ENCODE measurements at regions of chr1 and their contacts with region 1.

Region 1: GRCh38 chr1:19596714-19597495 is 47.2 kb upstream of the NBL1 start:
- DNase-seq: peak; percentile 92 to 100 (median 94)
- ATAC-seq: peak; percentile 63
- H3K4me3 ChIP-seq: peak overlapping the region; percentile 90
- H3K4me3 Mint-ChIP-seq: peak overlapping the region; percentile 96
- H3K27ac ChIP-seq: peak overlapping the region; percentile 100
- H3K27ac Mint-ChIP-seq: peak overlapping the region; percentile 100
- H3K4me1 ChIP-seq: peaks cover 55% of the 10 kb centered on the region
- H3K4me1 Mint-ChIP-seq: peaks cover 49% of the 10 kb centered on the region
- H3K27me3 ChIP-seq: no peaks in the 10 kb centered on the region
- H3K27me3 Mint-ChIP-seq: no peaks in the 10 kb centered on the region
- CTCF ChIP-seq: no peak

Region 2: GRCh38 chr1:19251305-19252196 is 345.4 kb before region 1 on chr1 and contains the starts of genes EMC1 and MRTO4:
- CTCF ChIA-PET with region 1: no interaction called
- POLR2A ChIA-PET with region 1: interaction called, 9 read pairs
- intact Hi-C with region 1: loop called in 1 of 2 experiments (anchors 2 kb)
- DNase-seq: peak; percentile 79 to 92 (median 86)
- ATAC-seq: peak; percentile 93
- H3K4me3 ChIP-seq: peak within 1 kb of the TSS; percentile 80
- H3K4me3 Mint-ChIP-seq: peak within 1 kb of the TSS; percentile 96
- H3K27ac ChIP-seq: peak within 1 kb of the TSS; percentile 93 to 95
- H3K27ac Mint-ChIP-seq: peak within 1 kb of the TSS; percentile 94
- H3K4me1 ChIP-seq: peaks cover 40% of the 10 kb centered on the region
- H3K4me1 Mint-ChIP-seq: peaks cover 34% of the 10 kb centered on the region
- H3K27me3 ChIP-seq: no peaks in the 10 kb centered on the region
- H3K27me3 Mint-ChIP-seq: no peaks in the 10 kb centered on the region
- CTCF ChIP-seq: no peak
- total RNA-seq, gene EMC1: 21.9 to 22.2 TPM
- total RNA-seq, gene MRTO4: 10.2 to 12.0 TPM

Region 3: DNA sequence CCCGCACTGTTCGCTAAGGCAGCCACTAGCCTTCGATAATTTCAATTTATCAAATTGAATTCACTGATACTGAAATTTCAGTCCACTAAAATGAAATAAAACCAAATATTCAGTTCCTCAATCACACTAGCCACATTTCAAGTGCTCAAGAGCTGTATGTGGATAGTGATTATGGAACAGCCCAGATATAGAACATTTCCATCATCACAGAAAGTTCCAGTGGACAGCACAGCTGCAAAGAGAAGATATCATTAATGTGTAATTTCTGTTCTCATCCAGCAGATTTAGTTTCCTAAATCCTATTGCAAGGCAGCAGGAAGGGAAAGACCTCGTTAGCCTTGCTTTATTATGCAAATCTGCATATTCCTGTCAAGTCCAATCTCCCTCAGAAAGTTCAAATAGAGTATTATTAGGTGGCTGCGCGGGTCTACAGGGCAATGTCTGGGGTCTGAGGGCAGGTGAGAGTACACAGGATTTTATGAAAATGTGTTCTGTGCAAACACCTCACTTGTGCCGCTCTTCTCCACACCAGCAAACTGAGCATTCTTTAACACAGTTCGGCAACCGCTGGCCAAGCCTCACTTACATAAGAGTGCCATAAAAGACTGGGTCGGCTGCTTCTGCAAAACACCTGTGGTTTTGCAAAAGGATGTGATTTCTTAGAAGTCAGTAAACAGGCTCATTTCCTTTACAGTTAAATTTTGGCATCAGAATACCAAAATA is 134.0 kb before region 1 on chr1:
- CTCF ChIA-PET with region 1: no interaction called
- POLR2A ChIA-PET with region 1: interaction called, 15 read pairs
- intact Hi-C with region 1: loop called in 1 of 2 experiments (anchors 1 kb)
- DNase-seq: peak; percentile 55 to 91 (median 69)
- ATAC-seq: peak; percentile 78
- H3K4me3 ChIP-seq: peak overlapping the region; percentile 24
- H3K4me3 Mint-ChIP-seq: peak overlapping the region; percentile 81
- H3K27ac ChIP-seq: peak overlapping the region; percentile 42 to 93
- H3K27ac Mint-ChIP-seq: peak overlapping the region; percentile 86
- H3K4me1 ChIP-seq: peaks cover 100% of the 10 kb centered on the region
- H3K4me1 Mint-ChIP-seq: peaks cover 88% of the 10 kb centered on the region
- H3K27me3 ChIP-seq: no peaks in the 10 kb centered on the region
- H3K27me3 Mint-ChIP-seq: no peaks in the 10 kb centered on the region
- CTCF ChIP-seq: no peak

Region 4: DNA sequence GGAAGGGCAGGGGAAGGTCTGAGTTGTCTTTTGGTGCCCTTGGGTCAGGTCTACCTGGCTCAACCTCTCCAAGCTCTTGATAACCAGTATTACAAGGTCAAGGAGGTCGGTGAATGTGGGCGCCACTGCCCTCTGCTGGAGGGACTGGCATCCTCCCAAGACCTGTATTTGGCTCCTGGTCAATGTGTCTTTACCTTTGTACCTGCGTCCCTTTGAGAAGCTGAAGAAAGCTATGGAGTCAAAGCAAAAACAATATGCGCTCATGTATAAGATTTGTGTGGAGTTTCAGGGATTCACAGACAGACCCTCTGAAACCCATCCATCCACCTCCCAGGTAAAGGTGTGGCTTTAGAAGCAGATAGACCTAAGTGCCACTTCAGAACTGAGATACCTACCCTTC is 14.6 kb before region 1 on chr1:
- CTCF ChIA-PET with region 1: interaction called, 7 read pairs
- POLR2A ChIA-PET with region 1: interaction called, 11 read pairs
- intact Hi-C with region 1: no loop called
- DNase-seq: peak; percentile 59 to 88 (median 76)
- ATAC-seq: peak; percentile 77
- H3K4me3 ChIP-seq: no peak overlapping the region
- H3K4me3 Mint-ChIP-seq: no peak overlapping the region
- H3K27ac ChIP-seq: no peak overlapping the region
- H3K27ac Mint-ChIP-seq: no peak overlapping the region
- H3K4me1 ChIP-seq: peaks cover 11% of the 10 kb centered on the region
- H3K4me1 Mint-ChIP-seq: peaks cover 9% of the 10 kb centered on the region
- H3K27me3 ChIP-seq: no peaks in the 10 kb centered on the region
- H3K27me3 Mint-ChIP-seq: peaks cover 4% of the 10 kb centered on the region
- CTCF ChIP-seq: peak; percentile 91

Region 5: DNA sequence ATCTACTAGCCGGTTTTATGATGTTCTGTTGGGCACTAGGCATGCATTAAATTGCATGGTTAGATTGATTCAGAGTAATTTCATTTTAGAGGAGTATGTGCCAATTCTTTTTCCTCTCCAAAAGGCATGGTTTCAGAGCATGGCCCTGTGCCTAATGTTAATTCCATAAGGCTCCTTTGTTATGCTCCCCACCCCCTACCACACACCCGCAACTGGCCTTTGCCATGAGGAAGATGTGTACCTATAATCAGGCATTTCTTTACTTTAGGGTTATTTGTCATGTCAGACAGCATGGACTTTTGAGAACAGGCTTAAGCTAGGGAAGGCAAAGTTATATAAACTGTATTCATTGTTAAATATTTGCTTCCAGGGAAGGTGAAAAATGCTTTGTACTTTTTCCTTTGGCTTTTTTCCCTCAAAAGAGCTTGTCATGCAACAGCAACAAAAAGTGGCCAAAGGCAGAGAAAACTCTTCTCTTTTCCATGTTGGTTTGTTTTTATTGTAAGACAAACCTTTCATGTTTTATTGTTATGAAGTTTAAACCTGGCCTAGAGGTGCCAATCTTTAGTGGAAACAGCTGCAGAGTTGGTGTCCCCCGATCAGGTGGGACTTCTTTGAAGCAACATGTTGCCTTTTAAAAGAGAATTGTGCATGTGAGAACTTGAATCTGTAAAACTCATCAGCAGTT is 22.9 kb after region 1 on chr1:
- CTCF ChIA-PET with region 1: no interaction called
- POLR2A ChIA-PET with region 1: interaction called, 22 read pairs
- intact Hi-C with region 1: no loop called
- DNase-seq: no peak
- ATAC-seq: no peak
- H3K4me3 ChIP-seq: no peak overlapping the region
- H3K4me3 Mint-ChIP-seq: no peak overlapping the region
- H3K27ac ChIP-seq: no peak overlapping the region
- H3K27ac Mint-ChIP-seq: peak overlapping the region; percentile 36
- H3K4me1 ChIP-seq: no peaks in the 10 kb centered on the region
- H3K4me1 Mint-ChIP-seq: peaks cover 44% of the 10 kb centered on the region
- H3K27me3 ChIP-seq: no peaks in the 10 kb centered on the region
- H3K27me3 Mint-ChIP-seq: no peaks in the 10 kb centered on the region
- CTCF ChIP-seq: no peak

Region 6: GRCh38 chr1:19651141-19651737 is 54.3 kb after region 1 on chr1:
- CTCF ChIA-PET with region 1: interaction called, 10 read pairs
- POLR2A ChIA-PET with region 1: interaction called, 48 read pairs
- intact Hi-C with region 1: no loop called
- DNase-seq: peak in 11 of 14 experiments; percentile 24 to 77 (median 53)
- ATAC-seq: peak; percentile 64
- H3K4me3 ChIP-seq: no peak overlapping the region
- H3K4me3 Mint-ChIP-seq: no peak overlapping the region
- H3K27ac ChIP-seq: no peak overlapping the region
- H3K27ac Mint-ChIP-seq: no peak overlapping the region
- H3K4me1 ChIP-seq: peaks cover 38% of the 10 kb centered on the region
- H3K4me1 Mint-ChIP-seq: peaks cover 25% of the 10 kb centered on the region
- H3K27me3 ChIP-seq: no peaks in the 10 kb centered on the region
- H3K27me3 Mint-ChIP-seq: peaks cover 4% of the 10 kb centered on the region
- CTCF ChIP-seq: peak; percentile 57

Measured in CD4-positive, alpha-beta T cell (primary cell).